ENCODE measurements at regions of chr2 and their contacts with region 1.

Region 1: DNA sequence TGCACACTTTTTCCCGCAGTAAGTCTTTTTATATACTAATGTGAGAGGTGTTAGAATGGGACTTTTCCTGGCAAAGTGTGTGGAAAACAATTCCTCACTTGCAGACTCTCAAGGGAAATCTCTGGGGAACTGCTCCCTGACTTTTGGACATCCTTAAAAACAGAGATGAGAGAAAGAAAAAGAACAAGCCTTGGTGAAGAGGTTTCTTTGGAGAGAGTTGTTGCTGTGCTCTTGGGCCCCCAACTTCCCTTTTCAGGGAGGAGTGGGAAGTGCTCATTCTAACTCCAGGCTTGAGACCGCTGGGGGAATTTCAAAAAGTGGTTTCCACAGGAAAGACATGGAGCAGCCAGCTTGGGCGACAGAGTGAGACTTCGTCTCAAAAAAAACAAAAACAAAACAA is 142.6 kb upstream of the SPRED2 start:
- DNase-seq: no peak

Region 2: GRCh38 chr2:64914735-64915509 is 660.1 kb before region 1 on chr2:
- intact Hi-C with region 1: loop called (anchors 5 kb)
- DNase-seq: peak; percentile 54

Region 3: DNA sequence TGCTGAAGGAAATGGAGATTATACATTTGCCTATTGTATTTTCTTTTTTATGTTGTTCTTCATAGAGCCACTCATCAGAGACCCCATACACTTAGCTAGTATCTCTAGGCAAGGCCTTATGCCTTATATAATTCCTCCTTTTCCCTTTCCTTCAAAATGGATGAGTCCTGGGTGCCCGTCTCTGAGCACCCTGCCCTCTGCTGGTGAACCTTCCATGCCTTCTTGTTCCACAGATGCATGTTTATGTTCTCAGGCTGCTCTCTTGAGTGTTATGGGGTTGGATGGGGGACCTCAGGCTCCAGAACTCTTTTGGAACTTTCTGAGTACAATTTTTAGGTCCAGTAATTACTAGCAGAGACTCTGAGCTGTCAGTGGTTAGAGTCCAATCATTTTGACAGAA is 226.0 kb after region 1 on chr2:
- intact Hi-C with region 1: no loop called
- DNase-seq: no peak